ENCODE measurements at regions of chr9 and their contacts with region 1.

Region 1: DNA sequence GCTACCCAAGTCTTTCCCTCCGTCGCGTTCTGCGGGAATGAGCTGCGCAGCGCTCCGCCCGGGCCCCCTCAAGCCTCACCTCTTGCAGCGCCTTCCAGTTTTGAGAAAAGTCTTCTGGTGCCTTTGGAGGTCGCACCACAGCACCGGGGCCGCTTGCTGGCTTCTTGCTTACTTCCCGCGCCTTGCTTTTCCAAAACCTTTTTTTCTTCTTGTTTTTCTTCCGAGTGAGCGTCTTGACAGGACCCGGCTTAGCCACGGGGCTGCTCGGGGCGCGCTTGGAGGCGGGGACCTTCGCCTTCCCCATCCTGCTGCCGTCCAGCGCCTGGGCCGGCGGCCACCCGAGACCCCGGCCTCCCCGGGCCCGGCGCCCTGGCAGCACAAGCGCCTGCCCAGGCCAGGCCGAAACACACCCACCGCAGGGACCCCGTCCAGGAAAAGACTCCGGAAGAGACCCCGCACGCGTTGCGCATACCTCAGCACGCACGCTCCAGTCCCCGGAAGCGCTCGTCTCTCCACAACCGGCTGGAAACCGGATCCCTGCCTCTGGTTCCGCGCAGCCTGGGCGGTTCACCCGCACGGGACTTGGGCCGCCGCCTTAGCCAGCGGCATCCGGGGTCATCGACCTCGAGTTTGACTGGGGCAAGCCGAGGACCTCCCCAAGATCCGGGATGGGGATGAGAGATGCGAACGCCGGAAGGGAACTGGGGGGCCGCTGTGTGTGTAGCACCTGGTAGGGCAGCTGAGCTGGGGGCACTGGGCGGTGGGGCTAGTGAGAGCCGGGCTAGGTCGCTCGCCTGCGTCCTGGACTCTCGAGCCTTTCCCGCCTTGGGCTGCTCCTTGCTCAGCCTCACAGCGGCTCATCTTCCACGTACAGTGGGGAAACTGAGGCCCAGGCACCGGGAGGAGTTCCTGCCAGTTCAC is at the start of gene REXO4:
- DNase-seq: peak; percentile 88 to 94
- ATAC-seq: peak; percentile 95 to 98 (median 95)
- H3K4me3 ChIP-seq: peak within 1 kb of the TSS; percentile 91
- H3K27ac ChIP-seq: peak within 1 kb of the TSS; percentile 80
- H3K4me1 ChIP-seq: peaks cover 6% of the 10 kb centered on the region
- H3K27me3 ChIP-seq: no peaks in the 10 kb centered on the region
- CTCF ChIP-seq: no peak
- total RNA-seq, gene REXO4: 23.8 to 31.2 (median 28.6) TPM

Region 2: DNA sequence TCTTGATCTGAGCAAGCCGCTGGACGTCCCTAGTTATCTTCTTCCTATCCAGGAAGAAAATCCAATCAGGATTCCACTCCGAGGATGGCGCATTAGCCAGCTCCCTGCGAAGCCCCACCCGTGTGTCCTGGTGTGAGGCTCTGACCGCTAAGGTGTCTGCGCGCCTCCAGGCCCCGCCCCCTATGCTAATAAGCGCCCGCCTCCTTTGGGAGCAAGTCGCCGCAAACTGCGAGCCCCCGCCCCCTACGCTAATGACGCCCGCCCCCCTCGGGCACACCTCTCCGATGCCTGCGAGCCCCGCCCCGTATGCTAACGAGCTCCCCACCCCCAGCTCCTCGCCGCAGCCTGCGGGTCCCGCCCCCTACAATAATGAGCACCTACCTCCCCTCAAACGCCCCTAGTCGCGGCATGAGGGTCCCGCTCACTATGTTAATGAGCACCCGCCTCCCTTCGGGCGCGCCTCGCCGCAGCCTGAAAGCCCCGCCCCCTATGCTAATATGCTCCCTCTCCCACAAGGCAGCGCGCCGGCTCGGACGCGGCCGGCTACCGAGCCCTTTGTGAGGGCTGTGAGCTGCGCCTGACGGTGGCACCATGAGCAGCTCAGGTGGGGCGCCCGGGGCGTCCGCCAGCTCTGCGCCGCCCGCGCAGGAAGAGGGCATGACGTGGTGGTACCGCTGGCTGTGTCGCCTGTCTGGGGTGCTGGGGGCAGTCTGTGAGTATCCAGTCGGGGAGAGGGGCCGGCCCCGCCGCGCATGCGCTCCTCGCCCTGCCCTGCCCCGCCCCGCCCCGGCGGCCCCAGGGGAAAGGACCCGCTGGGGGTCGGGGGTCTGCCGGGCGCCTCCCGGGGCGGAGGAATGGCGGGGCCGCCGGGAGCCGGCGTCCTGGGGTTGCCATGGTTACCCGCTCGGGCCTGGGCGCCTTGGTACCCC is 41.9 kb after region 1 on chr9 and contains the start of gene CACFD1:
- intact Hi-C with region 1: loop called (anchors 2 to 5 kb)
- DNase-seq: peak; percentile 97 to 98
- ATAC-seq: peak; percentile 92 to 95 (median 92)
- H3K4me3 ChIP-seq: peak within 1 kb of the TSS; percentile 93
- H3K27ac ChIP-seq: peak within 1 kb of the TSS; percentile 92
- H3K4me1 ChIP-seq: peaks cover 17% of the 10 kb centered on the region
- H3K27me3 ChIP-seq: no peaks in the 10 kb centered on the region
- CTCF ChIP-seq: no peak
- total RNA-seq, gene CACFD1: 2.8 to 9.4 (median 7.2) TPM

Region 3: GRCh38 chr9:133478851-133479711 is 61.3 kb after region 1 on chr9 and contains the start of gene SLC2A6:
- intact Hi-C with region 1: loop called in 1 of 2 experiments (anchors 5 kb)
- DNase-seq: peak; percentile 89 to 91
- ATAC-seq: peak; percentile 97 to 100 (median 98)
- H3K4me3 ChIP-seq: peak within 1 kb of the TSS; percentile 75
- H3K27ac ChIP-seq: peak within 1 kb of the TSS; percentile 60
- H3K4me1 ChIP-seq: peaks cover 6% of the 10 kb centered on the region
- H3K27me3 ChIP-seq: no peaks in the 10 kb centered on the region
- CTCF ChIP-seq: no peak
- total RNA-seq, gene SLC2A6: 1.2 to 2.7 (median 1.7) TPM